Panc1 (cell line): ENCODE measurements at regions of chr19 and their contacts with region 1.

Region 1: DNA sequence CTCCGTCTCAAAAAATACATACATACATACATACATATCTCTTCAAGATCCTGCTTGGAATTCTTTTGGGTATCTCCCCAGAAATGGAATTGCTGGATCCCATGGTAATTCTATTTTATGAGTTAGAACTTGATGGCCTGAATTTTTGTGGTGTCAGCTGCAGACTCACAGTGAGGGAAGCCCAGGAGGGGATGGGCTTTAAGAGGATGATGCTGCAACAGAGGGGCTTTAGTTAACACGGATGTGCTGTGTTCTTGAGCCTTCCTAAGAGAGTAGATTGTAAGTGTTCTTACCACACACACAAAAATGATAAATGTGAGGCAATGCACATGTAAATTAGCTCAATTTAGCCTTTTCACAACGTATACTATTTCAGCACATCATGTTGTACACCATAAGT is 31.8 kb downstream of the CACNG6 start:
- DNase-seq: no peak
- ATAC-seq: no peak
- H3K4me3 ChIP-seq: no peak overlapping the region
- H3K27ac ChIP-seq: peak overlapping the region; percentile 96
- H3K4me1 ChIP-seq: peaks cover 29% of the 10 kb centered on the region
- H3K27me3 ChIP-seq: no peaks in the 10 kb centered on the region
- CTCF ChIP-seq: no peak

Region 2: DNA sequence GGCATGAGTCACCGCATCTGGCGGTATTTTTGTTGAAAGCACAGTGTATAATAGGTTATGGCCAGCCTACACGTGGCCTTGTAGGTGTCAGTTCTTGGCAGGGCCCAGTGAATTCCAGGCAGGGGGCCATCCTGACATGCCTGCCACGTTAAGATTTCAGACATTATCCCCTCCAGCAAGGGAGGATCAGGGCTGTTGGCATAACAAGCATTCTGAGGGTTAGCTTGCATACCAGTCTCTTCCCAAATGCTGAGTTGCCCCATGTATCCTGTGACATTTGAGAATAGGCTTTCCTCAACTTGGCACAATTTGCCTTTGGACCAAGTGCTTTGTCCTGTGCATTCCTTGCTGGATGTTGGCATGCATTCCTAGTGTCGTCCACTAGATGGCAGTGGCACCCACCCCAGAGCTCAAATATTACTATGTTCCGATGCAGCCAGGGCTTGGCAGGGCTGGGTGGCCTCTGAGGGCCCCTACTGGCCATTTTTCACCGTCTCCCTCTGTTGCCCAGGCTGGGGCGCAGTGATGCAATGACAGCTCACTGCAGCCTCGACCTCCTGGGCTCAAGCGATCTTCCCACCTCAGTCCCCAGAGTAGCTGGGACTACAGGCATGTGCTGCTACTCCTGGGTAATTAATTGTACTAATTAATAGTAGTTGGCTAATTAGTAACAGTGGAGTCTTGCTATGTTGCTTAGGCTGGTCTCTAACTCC is 230.3 kb before region 1 on chr19:
- CTCF ChIA-PET with region 1: interaction called, 10 read pairs
- POLR2A ChIA-PET with region 1: no interaction called
- in situ Hi-C with region 1: no loop called
- intact Hi-C with region 1: no loop called
- DNase-seq: peak; percentile 89
- ATAC-seq: peak; percentile 100
- H3K4me3 ChIP-seq: peak overlapping the region in 1 of 2 experiments; percentile 26; a peak in 2 of 4 replicates
- H3K27ac ChIP-seq: no peak overlapping the region
- H3K4me1 ChIP-seq: no peaks in the 10 kb centered on the region
- H3K27me3 ChIP-seq: no peaks in the 10 kb centered on the region
- CTCF ChIP-seq: peak; percentile 100

Region 3: GRCh38 chr19:53906211-53907192 is 116.7 kb before region 1 on chr19:
- CTCF ChIA-PET with region 1: no interaction called
- POLR2A ChIA-PET with region 1: no interaction called
- in situ Hi-C with region 1: loop called (anchors 25 kb)
- intact Hi-C with region 1: loop called (anchors 5 kb)
- DNase-seq: no peak
- ATAC-seq: peak; percentile 47
- H3K4me3 ChIP-seq: peak overlapping the region; percentile 33 to 53
- H3K27ac ChIP-seq: peak overlapping the region; percentile 36; the same call in 1 of the 2 replicates
- H3K4me1 ChIP-seq: peaks cover 23% of the 10 kb centered on the region
- H3K27me3 ChIP-seq: no peaks in the 10 kb centered on the region
- CTCF ChIP-seq: peak; percentile 99

Region 4: GRCh38 chr19:53977429-53977990 is 45.7 kb before region 1 on chr19:
- CTCF ChIA-PET with region 1: interaction called, 14 read pairs
- POLR2A ChIA-PET with region 1: interaction called, 17 read pairs
- in situ Hi-C with region 1: no loop called
- intact Hi-C with region 1: no loop called
- DNase-seq: peak; percentile 81
- ATAC-seq: peak; percentile 10
- H3K4me3 ChIP-seq: peak overlapping the region; percentile 54 to 79
- H3K27ac ChIP-seq: peak overlapping the region; percentile 90
- H3K4me1 ChIP-seq: peaks cover 10% of the 10 kb centered on the region
- H3K27me3 ChIP-seq: no peaks in the 10 kb centered on the region
- CTCF ChIP-seq: no peak

Region 5: GRCh38 chr19:53982611-53983010 is 40.6 kb before region 1 on chr19:
- CTCF ChIA-PET with region 1: interaction called, 14 read pairs
- POLR2A ChIA-PET with region 1: interaction called, 17 read pairs
- in situ Hi-C with region 1: no loop called
- intact Hi-C with region 1: loop called (anchors 5 kb)
- DNase-seq: no peak
- ATAC-seq: no peak
- H3K4me3 ChIP-seq: 0 out of 4 replicates have a peak overlapping the region, but pooled peaks of 1 of the 2 experiments have one; percentile 8
- H3K27ac ChIP-seq: no peak overlapping the region
- H3K4me1 ChIP-seq: peaks cover 29% of the 10 kb centered on the region
- H3K27me3 ChIP-seq: no peaks in the 10 kb centered on the region
- CTCF ChIP-seq: no peak

Region 6: DNA sequence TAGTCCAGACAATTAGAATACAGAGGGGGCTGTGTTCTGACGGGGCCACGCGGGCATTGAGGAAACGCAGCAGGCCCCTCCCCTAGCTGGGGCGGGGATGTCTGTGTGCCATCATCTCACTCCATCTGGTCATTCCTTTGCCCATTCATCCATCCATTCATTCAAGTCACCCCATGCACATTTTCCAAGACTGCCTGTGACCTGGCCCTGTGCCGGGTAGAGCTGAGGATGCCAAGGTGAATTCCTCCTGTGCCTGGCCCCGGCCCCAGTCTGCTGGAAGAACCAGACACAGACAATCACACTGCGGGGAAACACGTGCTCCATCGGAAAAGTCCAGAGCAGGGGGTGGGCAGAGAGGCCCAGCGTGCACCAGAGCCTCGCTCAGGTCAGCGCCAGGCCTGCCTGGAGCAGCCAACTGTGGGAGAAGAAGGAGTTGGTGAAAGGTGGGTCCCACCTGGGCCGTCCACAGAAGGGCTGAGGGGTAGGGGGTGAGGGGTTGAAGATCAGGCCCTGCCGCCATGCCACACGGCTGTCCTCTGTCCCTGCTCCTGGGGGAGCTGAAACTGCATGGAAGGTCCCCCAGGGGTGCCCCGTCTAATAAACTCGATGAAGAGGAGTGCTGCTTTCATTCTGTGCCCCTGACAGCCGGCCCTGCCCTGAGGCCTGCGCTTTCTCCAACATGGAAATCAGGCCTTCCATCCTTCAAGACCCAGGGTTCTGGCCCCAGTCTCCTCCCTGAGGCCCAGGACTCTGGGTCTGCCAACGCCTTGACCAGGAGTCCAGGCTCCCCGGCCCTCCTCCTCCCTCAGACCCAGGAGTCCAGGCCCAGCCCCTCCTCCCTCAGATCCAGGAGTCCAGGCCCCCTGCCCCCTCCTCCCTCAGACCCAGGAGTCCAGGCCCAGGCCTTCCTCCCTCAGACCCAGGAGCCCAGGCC is 33.3 kb before region 1 on chr19:
- CTCF ChIA-PET with region 1: interaction called, 3 read pairs
- POLR2A ChIA-PET with region 1: interaction called, 12 read pairs
- in situ Hi-C with region 1: no loop called
- intact Hi-C with region 1: loop called (anchors 5 kb)
- DNase-seq: peak; percentile 87
- ATAC-seq: peak; percentile 71
- H3K4me3 ChIP-seq: peak overlapping the region in 1 of 2 experiments; percentile 7; a peak in 1 of 4 replicates
- H3K27ac ChIP-seq: peak overlapping the region; percentile 94
- H3K4me1 ChIP-seq: peaks cover 62% of the 10 kb centered on the region
- H3K27me3 ChIP-seq: no peaks in the 10 kb centered on the region
- CTCF ChIP-seq: no peak

Region 7: GRCh38 chr19:55638864-55639359 is 1615.7 kb after region 1 on chr19:
- CTCF ChIA-PET with region 1: interaction called, 10 read pairs
- POLR2A ChIA-PET with region 1: no interaction called
- in situ Hi-C with region 1: no loop called
- intact Hi-C with region 1: no loop called
- DNase-seq: no peak
- ATAC-seq: no peak
- H3K4me3 ChIP-seq: no peak overlapping the region
- H3K27ac ChIP-seq: no peak overlapping the region
- H3K4me1 ChIP-seq: peaks cover 27% of the 10 kb centered on the region
- H3K27me3 ChIP-seq: no peaks in the 10 kb centered on the region
- CTCF ChIP-seq: peak; percentile 89